ENCODE measurements at regions of chr3 and their contacts with region 1.

Region 1: GRCh38 chr3:44198284-44199269 is 43.1 kb upstream of the TOPAZ1 start:
- DNase-seq: peak; percentile 86
- H3K4me3 Mint-ChIP-seq: no peak overlapping the region
- H3K27ac Mint-ChIP-seq: no peak overlapping the region
- H3K4me1 Mint-ChIP-seq: peaks cover 11% of the 10 kb centered on the region
- H3K27me3 Mint-ChIP-seq: no peaks in the 10 kb centered on the region
- CTCF ChIP-seq: peak; percentile 83

Region 2: DNA sequence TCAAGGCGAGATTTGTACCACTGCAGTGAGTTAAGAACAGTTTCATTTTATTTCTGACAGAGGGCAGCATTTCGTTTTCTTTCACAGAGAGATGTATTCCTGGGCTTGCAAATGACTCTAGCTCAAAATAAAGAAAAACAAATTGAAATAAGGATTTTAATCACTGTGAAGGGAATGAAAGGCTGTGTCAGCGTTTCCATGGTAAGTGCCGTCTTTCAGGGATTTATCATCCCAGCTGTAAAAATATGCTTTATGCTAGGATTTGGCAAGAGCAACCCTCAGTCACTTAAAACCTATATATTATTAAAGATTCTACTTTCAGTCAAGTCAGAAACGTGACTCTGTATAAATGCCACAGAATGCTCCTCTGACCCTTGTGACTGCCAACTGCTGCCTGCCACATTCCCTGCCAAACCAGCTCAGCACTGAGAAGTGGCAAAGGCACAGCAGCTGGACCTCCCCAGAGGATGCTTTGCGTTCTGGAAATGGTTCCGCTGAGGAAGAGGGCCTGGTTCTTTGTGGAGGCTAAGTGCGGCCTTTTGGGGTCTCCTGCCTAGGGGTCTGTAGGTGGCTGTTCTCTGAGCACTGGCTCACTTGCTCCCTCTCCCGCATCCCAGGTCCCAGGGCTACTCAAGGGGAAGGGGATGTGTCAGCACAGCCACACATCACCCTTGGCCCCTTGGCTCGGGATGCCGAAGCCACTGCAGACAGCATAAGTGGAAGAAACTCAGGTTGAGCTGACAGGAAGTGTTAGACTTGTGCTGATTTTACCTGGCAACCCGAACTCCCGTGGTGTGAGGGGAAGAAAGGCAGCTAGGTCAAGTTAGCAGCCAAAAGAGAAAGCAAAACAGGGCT is 1036.1 kb before region 1 on chr3:
- CTCF ChIA-PET with region 1: no interaction called
- POLR2A ChIA-PET with region 1: no interaction called
- intact Hi-C with region 1: loop called (anchors 2 kb)
- DNase-seq: peak; percentile 49
- H3K4me3 Mint-ChIP-seq: no peak overlapping the region
- H3K27ac Mint-ChIP-seq: no peak overlapping the region
- H3K4me1 Mint-ChIP-seq: no peaks in the 10 kb centered on the region
- H3K27me3 Mint-ChIP-seq: no peaks in the 10 kb centered on the region
- CTCF ChIP-seq: peak; percentile 24

Region 3: DNA sequence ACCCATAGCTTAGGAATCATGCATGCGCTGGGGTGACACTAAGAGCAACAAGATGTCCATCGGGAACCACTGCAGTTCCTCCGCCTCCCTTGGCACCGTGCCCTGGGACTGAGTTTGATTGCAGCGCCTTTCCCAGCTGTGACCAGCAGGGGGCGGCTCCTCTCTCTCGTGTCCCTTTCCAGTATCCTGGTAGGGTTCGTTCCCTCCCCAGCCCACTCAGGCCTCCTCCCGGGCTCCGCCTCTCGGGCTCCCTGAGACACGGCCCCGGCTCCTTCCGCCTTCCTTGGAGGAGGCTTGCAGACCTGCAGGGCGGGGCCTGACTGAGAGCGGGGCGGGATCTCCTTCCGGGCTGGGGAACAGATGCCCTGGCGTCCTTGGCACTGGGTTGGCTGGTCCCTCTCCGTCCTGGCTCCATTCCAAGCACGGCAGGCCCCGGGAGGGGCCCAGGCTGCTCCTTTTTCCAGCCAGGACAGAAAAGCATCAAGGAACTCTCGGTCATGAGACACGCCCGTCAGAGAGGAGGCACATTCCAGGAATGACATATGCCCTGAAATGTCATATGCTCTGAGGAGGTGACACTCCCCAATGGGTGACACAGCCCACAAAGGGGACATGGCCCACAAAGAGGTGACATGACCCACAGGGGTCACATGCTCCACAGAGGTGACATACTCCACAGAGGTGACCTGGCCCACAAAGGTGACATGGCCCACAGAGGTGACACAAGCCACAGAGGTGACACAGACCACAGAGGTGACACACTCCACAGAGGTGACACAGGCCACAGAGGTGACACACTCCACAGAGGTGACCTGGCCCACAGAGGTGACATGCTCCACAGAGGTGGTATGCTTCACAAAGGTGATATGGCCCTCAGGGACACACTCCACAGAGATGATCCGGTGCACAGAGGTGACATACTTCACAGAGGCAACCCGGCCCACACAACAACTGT is 428.8 kb before region 1 on chr3:
- CTCF ChIA-PET with region 1: interaction called, 10 read pairs
- POLR2A ChIA-PET with region 1: no interaction called
- intact Hi-C with region 1: loop called (anchors 1 kb)
- DNase-seq: peak; percentile 98
- H3K4me3 Mint-ChIP-seq: peak overlapping the region; percentile 58
- H3K27ac Mint-ChIP-seq: no peak overlapping the region
- H3K4me1 Mint-ChIP-seq: peaks cover 56% of the 10 kb centered on the region
- H3K27me3 Mint-ChIP-seq: no peaks in the 10 kb centered on the region
- CTCF ChIP-seq: peak; percentile 93

Region 4: DNA sequence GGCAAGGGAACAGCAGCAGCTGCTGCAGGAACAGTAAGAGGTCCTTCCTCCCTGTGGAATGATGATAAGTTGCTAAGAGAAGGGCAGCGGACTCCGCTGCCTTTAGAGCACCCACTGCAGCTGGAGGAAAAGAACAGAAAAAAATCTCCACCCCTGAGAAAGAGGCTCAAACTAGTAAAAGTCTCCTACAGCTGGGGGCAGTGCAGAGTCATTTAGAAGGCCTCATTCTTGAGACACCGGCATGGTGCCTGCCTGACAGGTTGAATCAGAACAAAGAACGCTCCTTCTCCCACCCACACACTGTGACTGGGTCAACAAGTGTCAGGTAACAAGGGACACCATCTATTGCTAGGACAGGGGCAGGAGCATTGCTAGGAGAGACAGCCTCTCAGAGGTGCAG is 319.4 kb before region 1 on chr3:
- CTCF ChIA-PET with region 1: interaction called, 3 read pairs
- POLR2A ChIA-PET with region 1: no interaction called
- intact Hi-C with region 1: loop called (anchors 1 kb)
- DNase-seq: peak; percentile 50
- H3K4me3 Mint-ChIP-seq: no peak overlapping the region
- H3K27ac Mint-ChIP-seq: no peak overlapping the region
- H3K4me1 Mint-ChIP-seq: peaks cover 1% of the 10 kb centered on the region
- H3K27me3 Mint-ChIP-seq: no peaks in the 10 kb centered on the region
- CTCF ChIP-seq: peak; percentile 8

Region 5: GRCh38 chr3:44065311-44066094 is 133.1 kb before region 1 on chr3:
- CTCF ChIA-PET with region 1: no interaction called
- POLR2A ChIA-PET with region 1: no interaction called
- intact Hi-C with region 1: loop called (anchors 5 kb)
- DNase-seq: peak; percentile 96
- H3K4me3 Mint-ChIP-seq: no peak overlapping the region
- H3K27ac Mint-ChIP-seq: no peak overlapping the region
- H3K4me1 Mint-ChIP-seq: peaks cover 24% of the 10 kb centered on the region
- H3K27me3 Mint-ChIP-seq: no peaks in the 10 kb centered on the region
- CTCF ChIP-seq: no peak